Astrocyte of the spinal cord (primary cell): ENCODE measurements at regions of chr3 and their contacts with region 1.

Region 1: GRCh38 chr3:11601446-11602238 is 42.1 kb downstream of the VGLL4 start:
- DNase-seq: peak; percentile 68
- H3K4me3 ChIP-seq: no peak overlapping the region
- CTCF ChIP-seq: no peak

Region 2: DNA sequence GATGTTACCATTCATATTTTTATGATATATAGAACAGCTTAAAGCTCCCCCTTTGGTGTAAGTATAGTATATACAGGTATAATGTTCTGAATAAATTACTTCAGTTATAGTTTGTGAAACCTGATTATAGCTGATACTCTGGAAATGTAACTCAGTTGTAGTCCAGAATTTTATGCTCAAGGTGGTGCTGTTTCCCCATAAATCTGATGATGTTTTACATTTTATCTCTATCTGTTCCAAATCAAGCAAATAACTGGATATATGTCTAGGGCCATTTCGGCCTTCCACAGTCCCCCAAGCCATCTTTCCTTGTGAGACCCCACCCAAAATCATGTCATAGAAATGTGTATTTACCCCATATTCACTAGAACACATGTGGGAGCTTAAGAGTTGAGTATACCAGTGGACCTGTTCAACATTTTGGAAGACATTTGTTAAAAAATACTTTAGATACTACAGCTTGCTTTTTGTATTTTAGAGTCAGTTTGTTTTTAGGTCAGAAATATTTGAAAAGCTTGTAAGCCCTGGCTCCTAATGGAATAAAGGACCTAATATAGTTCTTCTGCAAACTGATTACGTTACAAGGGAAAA is 222.3 kb before region 1 on chr3:
- in situ Hi-C with region 1: loop called (anchors 25 kb)
- DNase-seq: peak; percentile 84
- H3K4me3 ChIP-seq: no peak overlapping the region
- CTCF ChIP-seq: peak; percentile 43